ENCODE measurements at regions of chr4 and their contacts with region 1.

Region 1: DNA sequence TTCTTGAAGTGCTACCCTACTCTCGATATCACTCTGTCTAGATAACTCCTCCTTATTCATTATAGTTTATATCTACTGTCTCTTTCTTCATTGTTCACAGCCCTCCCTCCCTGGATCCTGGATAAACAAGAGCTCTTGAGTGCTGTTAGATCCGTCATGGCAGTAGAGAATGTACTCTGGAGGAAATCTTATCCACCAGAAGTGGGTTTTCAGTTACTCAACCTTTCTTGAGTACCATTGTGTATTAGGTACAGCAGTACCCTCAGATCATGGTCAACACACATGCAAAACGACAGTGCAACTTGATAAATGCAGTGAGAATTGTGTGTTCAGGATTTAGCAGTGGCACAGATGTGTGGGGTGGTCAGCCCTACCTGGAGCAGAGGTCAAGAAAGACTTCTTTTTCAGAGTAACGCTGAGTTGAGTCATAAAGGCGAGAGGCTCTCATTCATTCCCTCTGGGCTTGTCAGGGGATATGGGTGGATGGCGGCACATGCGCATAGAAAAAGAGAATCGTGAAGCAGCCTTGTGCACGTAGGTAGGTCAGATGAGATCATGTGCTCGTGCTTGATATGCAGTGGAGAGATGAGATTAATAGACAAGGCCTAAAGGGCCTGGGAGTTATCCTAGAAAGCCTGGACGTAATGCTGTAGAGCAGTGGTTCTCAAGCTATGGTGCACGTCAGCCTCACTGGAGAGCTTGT is 89.5 kb downstream of the SNX25 start:
- DNase-seq: no peak
- ATAC-seq: no peak
- H3K4me3 ChIP-seq: no peak overlapping the region
- H3K27ac ChIP-seq: no peak overlapping the region
- H3K4me1 ChIP-seq: peaks cover 3% of the 10 kb centered on the region; the same call in 1 of the 2 replicates
- H3K27me3 ChIP-seq: no peaks in the 10 kb centered on the region
- CTCF ChIP-seq: no peak
- EP300 ChIP-seq: no peak
- POLR2A ChIP-seq: no peak
- RAD21 ChIP-seq: no peak

Region 2: DNA sequence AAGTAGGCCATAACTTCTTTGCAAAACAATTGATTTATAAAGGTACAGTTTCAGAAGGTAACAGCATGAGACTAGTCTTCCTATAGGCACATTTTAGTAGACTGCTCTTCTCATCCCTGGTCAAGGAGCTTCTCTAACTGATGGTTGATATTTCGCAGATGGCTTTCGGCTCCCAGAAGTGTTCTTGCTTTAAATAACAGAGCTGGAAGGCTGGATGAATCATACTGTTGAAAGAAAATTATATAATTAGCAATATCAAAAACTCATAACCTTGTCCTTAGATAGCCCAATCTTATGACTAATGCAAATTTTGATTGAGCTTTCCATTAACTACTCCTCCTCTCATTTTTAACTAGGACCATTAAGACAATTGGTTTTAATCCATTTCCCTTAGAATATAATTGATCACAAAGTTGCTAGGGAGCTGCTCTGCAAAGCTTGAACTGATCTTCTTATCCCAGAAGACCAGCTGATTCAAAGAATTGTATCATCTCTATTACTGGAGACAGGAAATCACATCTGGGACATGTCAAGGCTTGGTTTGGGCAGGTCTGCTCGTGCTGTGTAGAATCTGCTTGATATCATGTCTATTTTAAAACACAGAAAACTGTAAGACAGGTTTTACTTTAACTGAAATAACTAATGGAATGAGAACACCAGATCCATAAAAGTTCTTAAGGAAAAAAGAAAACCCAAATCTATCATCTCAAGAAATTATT is 603.5 kb before region 1 on chr4:
- CTCF ChIA-PET with region 1: no interaction called
- POLR2A ChIA-PET with region 1: no interaction called
- RAD21 ChIA-PET with region 1: no interaction called
- SMC1A ChIA-PET with region 1: no interaction called
- in situ Hi-C with region 1: no loop called
- intact Hi-C with region 1: no loop called
- DNase-seq: no peak
- ATAC-seq: no peak
- H3K4me3 ChIP-seq: no peak overlapping the region
- H3K27ac ChIP-seq: no peak overlapping the region
- H3K4me1 ChIP-seq: no peaks in the 10 kb centered on the region
- H3K27me3 ChIP-seq: no peaks in the 10 kb centered on the region
- CTCF ChIP-seq: no peak
- EP300 ChIP-seq: no peak
- POLR2A ChIP-seq: no peak
- RAD21 ChIP-seq: no peak

Region 3: DNA sequence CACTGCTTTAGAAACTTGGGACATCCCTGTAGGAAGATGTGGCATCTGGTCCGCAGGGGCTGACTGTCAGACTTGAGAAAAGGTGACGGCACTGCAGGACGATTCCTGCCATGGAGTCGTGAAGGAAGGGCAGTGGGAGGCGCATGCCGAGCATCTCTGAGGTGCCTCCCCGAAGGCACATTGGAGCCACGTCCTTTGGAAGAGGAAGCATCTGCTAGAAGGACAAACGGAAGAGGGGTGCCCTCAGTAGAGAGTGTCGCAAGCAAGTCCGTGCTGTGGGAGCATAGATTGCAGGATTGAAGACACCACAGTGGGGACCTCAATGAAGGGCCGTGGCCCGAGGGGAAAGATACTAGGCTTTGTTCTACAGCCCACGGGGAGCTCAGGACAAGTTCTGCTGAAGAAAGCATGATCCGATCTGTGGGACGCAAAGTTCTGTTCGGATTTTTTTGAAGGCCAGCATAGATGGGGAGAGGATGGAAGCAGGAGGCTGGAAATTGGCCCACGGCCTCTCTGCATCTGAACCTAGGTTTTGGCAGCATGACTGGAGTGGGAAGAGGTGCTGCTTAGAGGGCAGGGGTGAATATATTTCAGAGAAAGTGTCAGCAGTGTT is 304.8 kb before region 1 on chr4:
- CTCF ChIA-PET with region 1: no interaction called
- POLR2A ChIA-PET with region 1: no interaction called
- RAD21 ChIA-PET with region 1: no interaction called
- SMC1A ChIA-PET with region 1: no interaction called
- in situ Hi-C with region 1: no loop called
- intact Hi-C with region 1: no loop called
- DNase-seq: no peak
- ATAC-seq: no peak
- H3K4me3 ChIP-seq: no peak overlapping the region
- H3K27ac ChIP-seq: no peak overlapping the region
- H3K4me1 ChIP-seq: no peaks in the 10 kb centered on the region
- H3K27me3 ChIP-seq: peaks cover 1 to 4% of the 10 kb centered on the region in 2 experiments; a peak in 3 of 4 replicates
- CTCF ChIP-seq: no peak
- EP300 ChIP-seq: no peak
- POLR2A ChIP-seq: no peak
- RAD21 ChIP-seq: no peak

Region 4: DNA sequence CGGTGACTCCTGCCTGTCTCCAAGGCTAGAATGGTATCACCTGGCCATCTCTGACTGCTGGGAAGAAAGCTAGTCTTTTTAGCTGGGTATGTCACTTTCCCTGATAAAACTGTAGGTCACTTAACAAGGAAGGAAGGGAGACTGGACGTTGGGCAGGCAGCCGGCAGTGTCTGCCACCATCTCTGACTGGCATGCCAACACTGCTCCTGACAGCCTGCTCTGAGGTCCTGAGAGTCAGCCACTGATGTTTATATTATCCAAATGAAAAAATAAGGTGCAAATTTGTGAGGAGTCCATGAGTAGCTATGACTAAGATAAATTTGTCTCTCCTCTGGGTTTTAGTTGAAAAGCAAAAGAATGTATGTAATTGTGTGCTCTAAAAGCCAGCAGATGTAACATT is 12.3 kb before region 1 on chr4:
- CTCF ChIA-PET with region 1: interaction called, 10 read pairs
- POLR2A ChIA-PET with region 1: interaction called, 4 read pairs
- RAD21 ChIA-PET with region 1: no interaction called
- SMC1A ChIA-PET with region 1: interaction called, 6 read pairs
- in situ Hi-C with region 1: no loop called
- intact Hi-C with region 1: no loop called
- DNase-seq: no peak
- ATAC-seq: no peak
- H3K4me3 ChIP-seq: no peak overlapping the region
- H3K27ac ChIP-seq: no peak overlapping the region
- H3K4me1 ChIP-seq: no peaks in the 10 kb centered on the region
- H3K27me3 ChIP-seq: no peaks in the 10 kb centered on the region
- CTCF ChIP-seq: no peak
- EP300 ChIP-seq: no peak
- POLR2A ChIP-seq: no peak
- RAD21 ChIP-seq: no peak